ENCODE measurements at regions of chr2 and their contacts with region 1.

Region 1: GRCh38 chr2:67561457-67561965 is 164.4 kb downstream of the ETAA1 start:
- DNase-seq: peak; percentile 95
- H3K4me3 ChIP-seq: peak overlapping the region in 1 of 3 experiments; percentile 8
- H3K27ac ChIP-seq: peak overlapping the region; percentile 92
- H3K4me1 ChIP-seq: peaks cover 32% of the 10 kb centered on the region
- H3K27me3 ChIP-seq: no peaks in the 10 kb centered on the region
- CTCF ChIP-seq: no peak
- POLR2A ChIP-seq: peak; percentile 42

Region 2: DNA sequence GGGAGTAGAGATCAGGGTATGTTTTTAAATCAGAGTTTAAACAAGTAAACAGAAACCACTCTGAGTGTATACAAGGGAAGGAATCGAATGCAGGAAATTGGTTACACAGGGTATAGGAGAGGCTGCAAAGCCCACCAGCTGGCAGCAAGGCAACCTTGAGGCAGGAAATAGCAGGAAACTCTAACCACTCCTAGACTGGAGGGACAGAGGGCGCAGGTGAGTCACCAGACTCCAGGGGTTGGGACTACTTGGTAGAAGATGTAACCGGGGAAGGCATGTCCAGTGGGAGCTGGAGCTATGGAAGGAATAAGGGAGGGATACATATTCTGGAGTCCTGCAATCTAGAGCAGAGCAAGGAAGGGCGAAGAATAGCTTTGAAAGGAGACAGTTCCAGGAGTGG is 974.3 kb before region 1 on chr2:
- CTCF ChIA-PET with region 1: no interaction called
- POLR2A ChIA-PET with region 1: no interaction called
- dilution Hi-C with region 1: no loop called
- intact Hi-C with region 1: loop called (anchors 10 kb)
- DNase-seq: no peak
- H3K4me3 ChIP-seq: no peak overlapping the region
- H3K27ac ChIP-seq: no peak overlapping the region
- H3K4me1 ChIP-seq: no peaks in the 10 kb centered on the region
- H3K27me3 ChIP-seq: peaks cover 23 to 51% of the 10 kb centered on the region in 2 experiments
- CTCF ChIP-seq: no peak
- POLR2A ChIP-seq: no peak

Region 3: GRCh38 chr2:67503066-67503795 is 58.3 kb before region 1 on chr2:
- CTCF ChIA-PET with region 1: interaction called, 8 read pairs
- POLR2A ChIA-PET with region 1: no interaction called
- dilution Hi-C with region 1: no loop called
- intact Hi-C with region 1: loop called (anchors 1 kb)
- DNase-seq: peak; percentile 90
- H3K4me3 ChIP-seq: no peak overlapping the region
- H3K27ac ChIP-seq: peak overlapping the region; percentile 95
- H3K4me1 ChIP-seq: peaks cover 18% of the 10 kb centered on the region
- H3K27me3 ChIP-seq: no peaks in the 10 kb centered on the region
- CTCF ChIP-seq: no peak
- POLR2A ChIP-seq: no peak

Measured in endothelial cell of umbilical vein (primary cell).